Endothelial cell of umbilical vein (primary cell): ENCODE measurements at regions of chr3 and their contacts with region 1.

Region 1: DNA sequence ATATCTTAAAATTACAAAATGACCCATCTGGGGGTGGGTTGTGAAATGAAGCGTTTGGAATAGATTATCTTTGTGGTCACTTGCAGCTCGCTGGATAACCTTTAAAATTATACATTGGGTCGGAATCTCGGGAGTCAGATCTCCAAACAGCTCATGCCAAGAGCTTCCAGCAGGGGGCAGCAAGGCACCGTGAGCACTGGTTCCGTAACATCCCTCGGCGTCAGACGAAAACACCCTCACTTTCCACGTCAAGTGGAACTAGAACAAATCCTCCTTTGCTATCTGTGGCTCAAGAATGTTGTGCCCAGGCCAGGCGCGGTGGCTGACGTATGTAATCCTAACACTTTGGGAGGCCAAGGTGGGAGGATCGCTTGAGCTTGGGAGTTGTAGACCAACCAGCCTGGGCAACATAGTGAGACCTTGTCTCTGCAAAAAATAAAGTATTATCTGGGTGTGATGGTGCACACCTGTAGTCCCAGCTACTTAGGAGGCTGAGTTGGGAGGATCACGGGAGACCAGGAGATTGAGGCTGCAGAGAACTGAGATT is 31.1 kb downstream of the UMPS start:
- DNase-seq: peak; percentile 75
- H3K4me3 ChIP-seq: no peak overlapping the region
- H3K27ac ChIP-seq: no peak overlapping the region
- H3K4me1 ChIP-seq: no peaks in the 10 kb centered on the region
- H3K27me3 ChIP-seq: no peaks in the 10 kb centered on the region
- CTCF ChIP-seq: peak; percentile 88 to 92
- POLR2A ChIP-seq: no peak

Region 2: GRCh38 chr3:124439603-124440002 is 321.7 kb before region 1 on chr3:
- CTCF ChIA-PET with region 1: no interaction called
- POLR2A ChIA-PET with region 1: no interaction called
- dilution Hi-C with region 1: no loop called
- intact Hi-C with region 1: no loop called
- DNase-seq: no peak
- H3K4me3 ChIP-seq: no peak overlapping the region
- H3K27ac ChIP-seq: no peak overlapping the region
- H3K4me1 ChIP-seq: no peaks in the 10 kb centered on the region
- H3K27me3 ChIP-seq: no peaks in the 10 kb centered on the region
- CTCF ChIP-seq: no peak
- POLR2A ChIP-seq: no peak

Region 3: GRCh38 chr3:124780761-124781475 is 19.6 kb after region 1 on chr3:
- CTCF ChIA-PET with region 1: interaction called, 112 read pairs
- POLR2A ChIA-PET with region 1: no interaction called
- dilution Hi-C with region 1: no loop called
- intact Hi-C with region 1: loop called (anchors 1 kb)
- DNase-seq: peak; percentile 43
- H3K4me3 ChIP-seq: no peak overlapping the region
- H3K27ac ChIP-seq: no peak overlapping the region
- H3K4me1 ChIP-seq: peaks cover 15% of the 10 kb centered on the region
- H3K27me3 ChIP-seq: no peaks in the 10 kb centered on the region
- CTCF ChIP-seq: no peak
- POLR2A ChIP-seq: no peak

Region 4: GRCh38 chr3:124834723-124835718 is 73.7 kb after region 1 on chr3:
- CTCF ChIA-PET with region 1: interaction called, 11 read pairs
- POLR2A ChIA-PET with region 1: no interaction called
- dilution Hi-C with region 1: no loop called
- intact Hi-C with region 1: no loop called
- DNase-seq: peak; percentile 90
- H3K4me3 ChIP-seq: no peak overlapping the region
- H3K27ac ChIP-seq: peak overlapping the region; percentile 25
- H3K4me1 ChIP-seq: peaks cover 44% of the 10 kb centered on the region
- H3K27me3 ChIP-seq: no peaks in the 10 kb centered on the region
- CTCF ChIP-seq: no peak
- POLR2A ChIP-seq: no peak

Region 5: GRCh38 chr3:124887177-124887931 is 126.0 kb after region 1 on chr3 and contains the start of gene ITGB5:
- CTCF ChIA-PET with region 1: interaction called, 28 read pairs
- POLR2A ChIA-PET with region 1: no interaction called
- dilution Hi-C with region 1: loop called (anchors 25 kb)
- intact Hi-C with region 1: loop called (anchors 1 kb)
- DNase-seq: peak; percentile 72
- H3K4me3 ChIP-seq: peak within 1 kb of the TSS; percentile 36 to 73 (median 47)
- H3K27ac ChIP-seq: peak within 1 kb of the TSS; percentile 57
- H3K4me1 ChIP-seq: peaks cover 23% of the 10 kb centered on the region
- H3K27me3 ChIP-seq: no peaks in the 10 kb centered on the region
- CTCF ChIP-seq: no peak
- POLR2A ChIP-seq: peak; percentile 57
- total RNA-seq, gene ITGB5: 144 TPM in 2 replicates

Region 6: GRCh38 chr3:124916837-124917409 is 155.6 kb after region 1 on chr3:
- CTCF ChIA-PET with region 1: interaction called, 10 read pairs
- POLR2A ChIA-PET with region 1: no interaction called
- dilution Hi-C with region 1: no loop called
- intact Hi-C with region 1: no loop called
- DNase-seq: peak; percentile 9
- H3K4me3 ChIP-seq: no peak overlapping the region
- H3K27ac ChIP-seq: no peak overlapping the region
- H3K4me1 ChIP-seq: no peaks in the 10 kb centered on the region
- H3K27me3 ChIP-seq: peaks cover 6 to 12% of the 10 kb centered on the region in 2 experiments
- CTCF ChIP-seq: no peak
- POLR2A ChIP-seq: no peak

Region 7: GRCh38 chr3:125437631-125438435 is 676.5 kb after region 1 on chr3:
- CTCF ChIA-PET with region 1: interaction called, 7 read pairs
- POLR2A ChIA-PET with region 1: no interaction called
- dilution Hi-C with region 1: no loop called
- intact Hi-C with region 1: loop called (anchors 5 kb)
- DNase-seq: peak; percentile 54
- H3K4me3 ChIP-seq: no peak overlapping the region
- H3K27ac ChIP-seq: no peak overlapping the region
- H3K4me1 ChIP-seq: no peaks in the 10 kb centered on the region
- H3K27me3 ChIP-seq: no peaks in the 10 kb centered on the region
- CTCF ChIP-seq: peak; percentile 88 to 89
- POLR2A ChIP-seq: no peak